Prostate gland (tissue), 2 donors: ENCODE measurements at regions of chr9 and their contacts with region 1.

Region 1: DNA sequence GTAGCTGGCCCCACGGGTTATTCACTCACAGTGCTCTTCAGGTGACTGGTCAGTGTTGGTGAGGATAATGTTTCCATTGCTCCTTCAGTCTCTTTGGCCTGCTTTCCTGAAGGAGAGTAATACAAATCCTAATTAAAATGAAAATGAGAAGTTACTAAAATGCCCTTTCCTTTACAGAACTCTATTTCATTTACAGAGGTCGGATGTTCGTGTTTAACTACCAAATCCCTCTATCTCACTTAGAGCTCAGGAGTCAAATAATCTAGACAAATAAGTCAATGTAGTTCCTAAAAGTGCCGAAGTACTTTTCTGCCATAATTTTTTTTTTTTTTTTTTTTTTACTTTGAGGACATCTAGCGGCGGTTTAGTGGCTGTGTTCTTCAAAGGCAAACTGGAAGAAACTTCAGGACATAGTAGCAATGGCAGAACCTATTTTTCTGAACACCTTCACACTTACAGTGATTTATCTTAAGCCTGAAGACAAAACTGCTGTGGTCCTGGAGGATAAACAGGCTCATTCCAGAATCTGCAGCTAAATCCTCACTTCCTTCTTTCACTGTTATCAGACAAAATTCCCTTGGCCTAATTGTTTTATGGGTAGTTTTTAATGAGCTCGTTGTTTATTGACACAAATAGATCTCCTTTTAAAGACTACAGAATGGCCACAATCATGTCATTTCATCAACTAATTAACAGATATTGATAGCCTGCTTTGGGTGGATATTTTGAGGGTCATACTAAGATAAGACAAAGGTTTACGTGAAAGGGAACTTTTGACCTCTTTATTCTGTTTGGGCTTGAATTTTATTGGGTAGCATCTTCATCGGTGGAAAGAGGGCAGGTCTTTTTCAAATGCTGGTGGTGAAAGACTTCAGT is 207.6 kb upstream of the DMRTA1 start:
- DNase-seq: no peak
- H3K4me3 ChIP-seq: no peak overlapping the region
- H3K27ac ChIP-seq: no peak overlapping the region
- H3K4me1 ChIP-seq: no peaks in the 10 kb centered on the region
- H3K27me3 ChIP-seq: no peaks in the 10 kb centered on the region
- CTCF ChIP-seq: peak in 2 of 4 experiments; percentile 16 to 30
- POLR2A ChIP-seq: no peak

Region 2: GRCh38 chr9:22037954-22038690 is 200.9 kb before region 1 on chr9:
- intact Hi-C with region 1: loop called (anchors 10 kb)
- DNase-seq: no peak
- H3K4me3 ChIP-seq: no peak overlapping the region
- H3K27ac ChIP-seq: no peak overlapping the region
- H3K4me1 ChIP-seq: no peaks in the 10 kb centered on the region
- H3K27me3 ChIP-seq: no peaks in the 10 kb centered on the region
- CTCF ChIP-seq: peak in 3 of 4 experiments; percentile 33 to 63 (median 54)
- POLR2A ChIP-seq: no peak